ENCODE measurements at regions of chrX and their contacts with region 1.

Region 1: DNA sequence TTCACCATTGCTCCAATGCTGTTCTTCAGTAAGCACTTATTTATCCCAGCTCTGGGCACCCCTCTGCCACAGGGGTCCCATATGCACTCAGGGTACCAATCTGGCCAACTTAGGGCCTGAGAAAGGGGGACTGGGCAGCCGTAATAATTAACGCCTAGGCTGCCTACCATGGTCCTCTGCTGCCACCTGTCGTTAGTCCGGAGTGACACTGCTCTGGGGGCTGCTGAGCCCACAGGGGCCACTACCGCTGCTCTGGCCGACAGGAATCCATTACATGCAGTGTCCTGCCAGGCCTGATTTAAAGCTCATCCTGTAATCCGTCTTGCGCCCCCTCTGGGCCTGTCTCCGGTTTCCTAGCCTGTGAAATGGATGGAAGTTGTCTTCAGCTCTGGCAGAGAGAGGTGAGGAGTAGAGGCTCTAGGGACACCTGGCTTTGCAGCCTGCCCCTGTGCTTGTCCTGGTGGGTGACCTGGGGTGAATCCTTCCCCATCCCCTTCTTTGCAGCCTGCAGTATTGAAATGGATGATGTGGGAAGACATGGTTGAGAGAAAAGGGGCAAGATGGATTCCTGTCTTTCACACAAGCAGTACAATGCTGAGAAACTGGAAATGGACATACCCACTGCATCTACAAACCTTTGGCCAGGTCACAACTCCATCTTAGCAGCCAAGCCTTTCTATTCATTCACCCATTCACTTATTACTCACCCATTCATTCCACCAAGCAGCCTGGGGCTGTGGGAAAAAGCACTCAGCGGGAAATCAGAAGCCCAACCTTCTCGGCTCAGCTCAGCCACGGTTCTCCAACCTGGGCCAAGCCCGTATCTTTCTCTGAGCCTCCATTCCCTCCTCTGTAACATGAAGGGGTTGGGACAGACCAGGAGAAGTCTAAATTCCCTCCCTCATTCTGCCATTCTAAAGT is 116.3 kb upstream of the NALF2 start:
- DNase-seq: no peak

Region 2: GRCh38 chrX:68822641-68823410 is 565.0 kb before region 1 on chrX:
- intact Hi-C with region 1: loop called (anchors 5 kb)
- DNase-seq: peak; percentile 71

Region 3: DNA sequence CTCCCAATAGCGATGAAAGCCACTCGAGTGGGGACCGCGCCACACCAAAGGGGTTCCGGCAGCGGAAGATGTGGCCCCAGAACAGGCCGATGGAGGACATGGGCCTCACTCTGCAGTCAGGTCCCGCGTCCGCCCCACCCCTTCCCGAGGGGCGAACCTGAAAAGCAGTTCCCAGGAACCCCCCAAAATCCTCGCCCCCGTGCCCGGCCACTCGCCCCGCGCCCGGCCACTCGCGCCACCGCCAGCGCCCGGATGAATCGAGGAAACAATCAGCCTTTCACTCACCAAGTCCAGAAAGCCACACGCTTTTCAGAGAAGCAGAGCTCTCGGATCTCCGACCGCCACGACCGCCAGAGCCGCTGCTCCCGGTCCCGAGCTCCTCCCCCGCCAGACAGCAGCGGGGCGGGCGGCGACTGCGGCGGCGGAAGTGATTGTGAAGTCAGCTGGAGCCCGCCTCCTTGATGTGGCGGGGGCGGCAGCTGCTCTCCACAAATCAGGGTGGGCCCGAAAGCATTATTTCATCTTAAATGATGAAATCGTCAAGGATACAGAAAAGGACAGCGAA is 222.7 kb before region 1 on chrX and contains the start of gene PJA1:
- intact Hi-C with region 1: loop called (anchors 10 kb)
- DNase-seq: peak; percentile 82
- total RNA-seq, gene PJA1: 18.8 TPM

Region 4: DNA sequence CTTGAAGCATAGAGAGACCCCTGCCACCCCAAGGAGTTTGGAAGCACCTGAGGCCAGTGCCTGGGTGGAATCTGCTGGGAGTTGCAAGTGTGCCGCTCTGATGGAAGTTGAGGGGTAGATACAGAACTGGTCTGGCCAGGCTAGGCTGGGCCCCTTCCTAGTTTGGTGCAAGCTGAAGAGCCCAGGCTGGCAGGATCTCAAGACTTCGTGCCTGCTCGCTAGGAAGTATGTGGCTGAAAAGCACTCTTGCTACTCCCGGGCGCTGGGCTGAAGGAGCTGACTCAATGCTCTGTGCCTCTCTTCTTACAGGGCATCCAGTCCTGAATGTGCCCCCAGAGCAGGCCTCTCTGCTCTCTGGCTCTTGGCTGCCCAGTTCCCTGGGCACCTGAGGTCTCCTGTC is 170.9 kb before region 1 on chrX:
- intact Hi-C with region 1: loop called (anchors 10 kb)
- DNase-seq: no peak

Measured in cardiac septum (tissue), 1 donor.